AG04450 (cell line): ENCODE measurements at regions of chrX and their contacts with region 1.

Region 1: GRCh38 chrX:149962859-149963757 is 24.8 kb upstream of the EOLA2 start:
- DNase-seq: peak; percentile 33
- H3K4me3 ChIP-seq: no peak overlapping the region
- H3K27ac ChIP-seq: no peak overlapping the region
- H3K27me3 ChIP-seq: no peaks in the 10 kb centered on the region
- CTCF ChIP-seq: peak; percentile 70

Region 2: DNA sequence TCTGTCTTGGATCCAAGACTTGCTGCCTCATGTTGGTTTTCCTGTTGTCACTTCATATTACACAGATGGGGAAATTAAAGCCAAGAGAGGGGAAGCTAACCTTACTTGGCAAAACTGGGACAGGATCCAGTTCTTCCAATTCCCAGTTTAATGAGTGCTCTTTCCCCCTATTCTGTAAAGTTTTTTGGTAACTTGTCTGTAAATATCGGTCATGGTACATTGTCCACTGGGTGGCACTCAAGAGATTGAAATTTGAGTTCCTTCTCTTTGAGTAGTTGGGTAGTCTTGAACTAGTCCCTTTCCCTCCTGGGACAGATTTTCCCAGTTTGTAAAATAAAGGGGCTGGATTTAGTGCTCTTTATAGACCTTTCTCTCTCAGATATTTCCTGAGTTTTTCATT is 12.4 kb before region 1 on chrX:
- CTCF ChIA-PET with region 1: no interaction called
- POLR2A ChIA-PET with region 1: no interaction called
- DNase-seq: peak; percentile 23
- H3K4me3 ChIP-seq: no peak overlapping the region
- H3K27ac ChIP-seq: no peak overlapping the region
- H3K27me3 ChIP-seq: no peaks in the 10 kb centered on the region
- CTCF ChIP-seq: peak; percentile 52

Region 3: GRCh38 chrX:150365051-150365989 is 402.2 kb after region 1 on chrX:
- CTCF ChIA-PET with region 1: interaction called, 27 read pairs
- POLR2A ChIA-PET with region 1: no interaction called
- DNase-seq: no peak
- H3K4me3 ChIP-seq: peak overlapping the region; percentile 74
- H3K27ac ChIP-seq: peak overlapping the region; percentile 85
- H3K27me3 ChIP-seq: no peaks in the 10 kb centered on the region
- CTCF ChIP-seq: peak; percentile 54